ENCODE measurements at regions of chr21 and their contacts with region 1.

Region 1: GRCh38 chr21:27476696-27477095 is 509.8 kb upstream of the ADAMTS5 start:
- DNase-seq: no peak
- ATAC-seq: peak in 5 of 8 donors; percentile 50 to 73 (median 70)
- H3K4me3 ChIP-seq: no peak overlapping the region
- H3K27ac ChIP-seq: no peak overlapping the region
- H3K4me1 ChIP-seq: peaks cover 0 to 7% (median 0%) of the 10 kb centered on the region in 9 donors
- H3K27me3 ChIP-seq: no peaks in the 10 kb centered on the region
- CTCF ChIP-seq: peak; percentile 40 to 68 (median 55)

Region 2: DNA sequence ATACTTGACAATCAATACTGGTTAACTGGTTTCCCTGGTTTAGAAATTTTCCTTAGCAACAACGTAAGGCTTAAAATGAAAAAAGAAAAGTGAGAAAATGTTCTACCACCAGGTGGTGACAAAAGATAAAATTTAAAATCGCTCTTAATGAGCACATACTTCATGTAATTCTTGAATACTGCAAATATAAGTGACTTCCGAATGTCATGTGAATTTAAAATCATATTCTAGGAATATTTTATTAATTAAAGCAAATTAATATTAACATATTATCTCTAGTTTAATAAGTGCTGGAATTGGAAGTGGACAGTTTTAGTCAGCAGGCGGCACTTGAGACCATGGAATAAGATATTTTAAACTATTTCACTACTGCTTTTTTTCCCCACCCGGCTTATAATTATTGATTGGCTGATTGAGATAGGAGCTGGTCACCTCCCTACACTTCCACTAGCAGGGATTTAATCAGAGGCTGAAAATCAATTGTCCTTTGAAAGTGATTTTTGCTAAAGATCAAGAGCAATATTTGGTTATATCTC is 626.5 kb before region 1 on chr21:
- intact Hi-C with region 1: loop called in 3 of 10 experiments (anchors 5 to 10 kb)
- DNase-seq: no peak
- ATAC-seq: no peak
- H3K4me3 ChIP-seq: peak overlapping the region in 6 of 10 donors; percentile 4 to 18 (median 8)
- H3K27ac ChIP-seq: no peak overlapping the region
- H3K4me1 ChIP-seq: peaks cover 0 to 33% (median 21%) of the 10 kb centered on the region in 9 donors
- H3K27me3 ChIP-seq: peaks cover 0 to 31% (median 0%) of the 10 kb centered on the region in 7 donors
- CTCF ChIP-seq: peak; percentile 56 to 84 (median 71)

Region 3: GRCh38 chr21:27362249-27362648 is 114.4 kb before region 1 on chr21:
- intact Hi-C with region 1: loop called in 2 of 10 experiments (anchors 10 kb)
- DNase-seq: no peak
- ATAC-seq: no peak
- H3K4me3 ChIP-seq: no peak overlapping the region
- H3K27ac ChIP-seq: no peak overlapping the region
- H3K4me1 ChIP-seq: no peaks in the 10 kb centered on the region
- H3K27me3 ChIP-seq: no peaks in the 10 kb centered on the region
- CTCF ChIP-seq: peak in 8 of 9 donors; percentile 17 to 55 (median 29)